ENCODE measurements at regions of chr1 and their contacts with region 1.

Region 1: GRCh38 chr1:206489980-206490770 is 17.2 kb upstream of the RASSF5 start:
- DNase-seq: peak; percentile 47
- H3K4me3 ChIP-seq: no peak overlapping the region
- H3K27ac ChIP-seq: no peak overlapping the region
- H3K4me1 ChIP-seq: no peaks in the 10 kb centered on the region
- H3K27me3 ChIP-seq: no peaks in the 10 kb centered on the region
- CTCF ChIP-seq: peak; percentile 94 to 100

Region 2: DNA sequence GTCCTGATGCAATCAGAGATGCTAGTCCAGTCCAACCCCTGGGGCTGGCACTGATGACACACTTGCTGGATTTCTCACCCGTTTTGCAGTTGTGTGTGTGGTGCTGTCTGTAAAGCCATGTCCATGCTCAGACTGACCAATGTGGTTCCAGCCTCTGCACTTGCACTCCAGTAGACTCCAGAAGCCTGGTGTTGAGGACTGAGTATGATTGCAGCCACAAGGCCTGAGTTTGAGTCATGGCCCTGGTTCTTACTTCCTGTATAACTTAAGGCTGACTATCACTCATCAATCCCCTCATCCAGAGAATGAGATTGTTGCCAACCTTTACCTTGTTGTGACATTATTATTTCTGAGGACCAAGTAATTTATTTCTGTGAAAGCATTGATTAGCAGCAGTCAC is 54.7 kb before region 1 on chr1:
- CTCF ChIA-PET with region 1: no interaction called
- dilution Hi-C with region 1: loop called (anchors 5 kb)
- in situ Hi-C with region 1: no loop called
- intact Hi-C with region 1: no loop called
- DNase-seq: no peak
- H3K4me3 ChIP-seq: no peak overlapping the region
- H3K27ac ChIP-seq: no peak overlapping the region
- H3K4me1 ChIP-seq: no peaks in the 10 kb centered on the region
- H3K27me3 ChIP-seq: no peaks in the 10 kb centered on the region
- CTCF ChIP-seq: no peak

Region 3: DNA sequence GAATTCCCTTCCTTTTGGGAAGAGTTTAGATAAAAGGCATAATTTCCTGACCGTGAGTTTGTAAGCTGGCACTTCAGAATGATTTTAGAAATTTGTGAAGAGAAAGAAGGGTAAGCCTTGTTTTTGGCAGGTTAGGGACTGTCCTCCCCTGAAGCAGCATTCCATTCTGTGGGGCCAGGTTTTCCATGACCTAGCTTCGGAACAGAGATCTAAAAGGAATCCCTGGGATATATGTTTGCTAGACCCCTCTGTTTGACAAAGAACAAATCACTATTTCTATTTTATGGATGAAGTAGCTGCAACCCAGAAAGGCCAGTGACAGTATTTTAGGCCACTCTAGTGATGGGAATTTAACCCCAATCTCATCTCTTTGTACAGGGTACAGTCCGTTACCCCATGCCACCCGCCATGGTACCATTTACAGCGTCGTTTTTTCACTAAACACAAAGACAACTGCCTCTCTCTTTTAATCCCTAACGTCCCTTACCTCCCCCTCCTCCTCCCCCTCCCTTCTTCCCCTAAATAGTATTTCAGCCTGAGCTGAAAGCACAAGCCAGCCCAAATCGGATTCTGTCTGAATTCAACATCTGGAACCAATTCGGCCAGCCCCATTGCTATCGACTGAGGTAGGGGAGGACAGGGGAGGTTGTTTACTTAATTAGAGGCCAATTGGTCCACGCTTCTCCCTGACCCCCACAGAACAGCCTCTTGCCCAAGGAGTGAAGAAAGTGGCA is 43.3 kb before region 1 on chr1:
- CTCF ChIA-PET with region 1: no interaction called
- dilution Hi-C with region 1: no loop called
- in situ Hi-C with region 1: no loop called
- intact Hi-C with region 1: no loop called
- DNase-seq: no peak
- H3K4me3 ChIP-seq: no peak overlapping the region
- H3K27ac ChIP-seq: no peak overlapping the region
- H3K4me1 ChIP-seq: peaks cover 19% of the 10 kb centered on the region
- H3K27me3 ChIP-seq: no peaks in the 10 kb centered on the region
- CTCF ChIP-seq: no peak

Region 4: GRCh38 chr1:206544562-206545257 is 54.5 kb after region 1 on chr1:
- CTCF ChIA-PET with region 1: no interaction called
- dilution Hi-C with region 1: no loop called
- in situ Hi-C with region 1: no loop called
- intact Hi-C with region 1: loop called (anchors 1 kb)
- DNase-seq: peak; percentile 31
- H3K4me3 ChIP-seq: no peak overlapping the region
- H3K27ac ChIP-seq: no peak overlapping the region
- H3K4me1 ChIP-seq: no peaks in the 10 kb centered on the region
- H3K27me3 ChIP-seq: no peaks in the 10 kb centered on the region
- CTCF ChIP-seq: peak; percentile 84 to 89

Region 5: GRCh38 chr1:206612129-206612876 is 122.1 kb after region 1 on chr1 and contains the start of gene EIF2D:
- CTCF ChIA-PET with region 1: no interaction called
- dilution Hi-C with region 1: no loop called
- in situ Hi-C with region 1: no loop called
- intact Hi-C with region 1: loop called (anchors 1 kb)
- DNase-seq: peak; percentile 87
- H3K4me3 ChIP-seq: peak within 1 kb of the TSS; percentile 74 to 93 (median 87)
- H3K27ac ChIP-seq: peak within 1 kb of the TSS; percentile 86
- H3K4me1 ChIP-seq: peaks cover 9% of the 10 kb centered on the region
- H3K27me3 ChIP-seq: no peaks in the 10 kb centered on the region
- CTCF ChIP-seq: peak; percentile 74 to 98
- total RNA-seq, gene EIF2D: 43.0 to 44.0 TPM

Region 6: GRCh38 chr1:206725109-206725963 is 235.2 kb after region 1 on chr1:
- CTCF ChIA-PET with region 1: no interaction called
- dilution Hi-C with region 1: no loop called
- in situ Hi-C with region 1: no loop called
- intact Hi-C with region 1: loop called (anchors 2 kb)
- DNase-seq: no peak
- H3K4me3 ChIP-seq: no peak overlapping the region
- H3K27ac ChIP-seq: no peak overlapping the region
- H3K4me1 ChIP-seq: peaks cover 19% of the 10 kb centered on the region
- H3K27me3 ChIP-seq: no peaks in the 10 kb centered on the region
- CTCF ChIP-seq: peak; percentile 62 to 68

Region 7: DNA sequence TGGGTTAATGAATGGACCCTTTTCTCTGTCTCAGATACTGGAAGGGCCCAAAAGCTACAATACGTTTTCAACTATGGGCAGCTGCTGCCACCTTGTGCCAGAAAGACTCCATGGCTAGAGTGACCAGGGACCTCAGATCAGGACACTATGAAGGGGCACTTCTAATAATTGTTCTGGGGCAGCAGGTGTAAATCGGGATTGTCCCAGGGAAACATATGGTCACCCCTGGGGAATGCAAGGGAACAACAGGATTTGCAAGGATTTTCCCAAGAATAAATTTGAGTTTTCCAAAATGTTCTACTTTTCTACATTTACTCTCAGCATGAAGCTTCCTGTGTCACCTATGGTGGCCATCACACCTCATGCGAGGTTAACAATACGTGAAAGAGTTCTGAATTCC is 492.0 kb after region 1 on chr1:
- CTCF ChIA-PET with region 1: no interaction called
- dilution Hi-C with region 1: loop called (anchors 5 kb)
- in situ Hi-C with region 1: no loop called
- intact Hi-C with region 1: loop called (anchors 5 kb)
- DNase-seq: peak; percentile 33
- H3K4me3 ChIP-seq: no peak overlapping the region
- H3K27ac ChIP-seq: no peak overlapping the region
- H3K4me1 ChIP-seq: no peaks in the 10 kb centered on the region
- H3K27me3 ChIP-seq: no peaks in the 10 kb centered on the region
- CTCF ChIP-seq: peak; percentile 82 to 83

Measured in mammary epithelial cell (primary cell).